ENCODE measurements at regions of chr12 and their contacts with region 1.

Region 1: GRCh38 chr12:108633534-108634248 is at the start of gene SELPLG:
- DNase-seq: peak; percentile 91
- H3K4me3 Mint-ChIP-seq: peak within 1 kb of the TSS; percentile 98
- H3K27ac Mint-ChIP-seq: peak within 1 kb of the TSS; percentile 100
- H3K4me1 Mint-ChIP-seq: peaks cover 53% of the 10 kb centered on the region
- H3K27me3 Mint-ChIP-seq: no peaks in the 10 kb centered on the region
- total RNA-seq, gene SELPLG: 19.9 to 21.9 TPM

Region 2: GRCh38 chr12:108495054-108495453 is 138.6 kb before region 1 on chr12:
- CTCF ChIA-PET with region 1: no interaction called
- intact Hi-C with region 1: no loop called
- DNase-seq: peak; percentile 38
- H3K4me3 Mint-ChIP-seq: no peak overlapping the region
- H3K27ac Mint-ChIP-seq: no peak overlapping the region
- H3K4me1 Mint-ChIP-seq: no peaks in the 10 kb centered on the region
- H3K27me3 Mint-ChIP-seq: peaks cover 23% of the 10 kb centered on the region

Region 3: GRCh38 chr12:108514973-108515814 is 118.5 kb before region 1 on chr12 and contains the start of gene FICD:
- CTCF ChIA-PET with region 1: interaction called, 3 read pairs
- intact Hi-C with region 1: loop called (anchors 2 kb)
- DNase-seq: peak; percentile 100
- H3K4me3 Mint-ChIP-seq: peak within 1 kb of the TSS; percentile 90
- H3K27ac Mint-ChIP-seq: peak within 1 kb of the TSS; percentile 84
- H3K4me1 Mint-ChIP-seq: peaks cover 28% of the 10 kb centered on the region
- H3K27me3 Mint-ChIP-seq: no peaks in the 10 kb centered on the region
- total RNA-seq, gene FICD: 3.4 to 3.7 TPM

Region 4: GRCh38 chr12:108618079-108618952 is 15.4 kb before region 1 on chr12:
- CTCF ChIA-PET with region 1: interaction called, 77 read pairs
- intact Hi-C with region 1: loop called (anchors 1 kb)
- DNase-seq: peak; percentile 81
- H3K4me3 Mint-ChIP-seq: no peak overlapping the region
- H3K27ac Mint-ChIP-seq: peak overlapping the region; percentile 20
- H3K4me1 Mint-ChIP-seq: peaks cover 36% of the 10 kb centered on the region
- H3K27me3 Mint-ChIP-seq: no peaks in the 10 kb centered on the region

Region 5: GRCh38 chr12:108664338-108665258 is 30.9 kb after region 1 on chr12:
- CTCF ChIA-PET with region 1: interaction called, 14 read pairs
- intact Hi-C with region 1: loop called (anchors 1 kb)
- DNase-seq: peak; percentile 95
- H3K4me3 Mint-ChIP-seq: peak overlapping the region; percentile 41
- H3K27ac Mint-ChIP-seq: peak overlapping the region; percentile 74
- H3K4me1 Mint-ChIP-seq: peaks cover 30% of the 10 kb centered on the region
- H3K27me3 Mint-ChIP-seq: no peaks in the 10 kb centered on the region

Region 6: GRCh38 chr12:108731105-108731865 is 97.6 kb after region 1 on chr12 and contains the start of gene CORO1C:
- CTCF ChIA-PET with region 1: no interaction called
- intact Hi-C with region 1: loop called (anchors 1 kb)
- DNase-seq: peak; percentile 96
- H3K4me3 Mint-ChIP-seq: peak within 1 kb of the TSS; percentile 89
- H3K27ac Mint-ChIP-seq: peak within 1 kb of the TSS; percentile 87
- H3K4me1 Mint-ChIP-seq: peaks cover 29% of the 10 kb centered on the region
- H3K27me3 Mint-ChIP-seq: no peaks in the 10 kb centered on the region
- total RNA-seq, gene CORO1C: 36.4 to 43.7 TPM

Region 7: GRCh38 chr12:108856428-108857157 is 222.9 kb after region 1 on chr12:
- CTCF ChIA-PET with region 1: no interaction called
- intact Hi-C with region 1: loop called (anchors 5 kb)
- DNase-seq: peak; percentile 74
- H3K4me3 Mint-ChIP-seq: peak overlapping the region; percentile 92
- H3K27ac Mint-ChIP-seq: peak overlapping the region; percentile 75
- H3K4me1 Mint-ChIP-seq: peaks cover 40% of the 10 kb centered on the region
- H3K27me3 Mint-ChIP-seq: no peaks in the 10 kb centered on the region

Region 8: DNA sequence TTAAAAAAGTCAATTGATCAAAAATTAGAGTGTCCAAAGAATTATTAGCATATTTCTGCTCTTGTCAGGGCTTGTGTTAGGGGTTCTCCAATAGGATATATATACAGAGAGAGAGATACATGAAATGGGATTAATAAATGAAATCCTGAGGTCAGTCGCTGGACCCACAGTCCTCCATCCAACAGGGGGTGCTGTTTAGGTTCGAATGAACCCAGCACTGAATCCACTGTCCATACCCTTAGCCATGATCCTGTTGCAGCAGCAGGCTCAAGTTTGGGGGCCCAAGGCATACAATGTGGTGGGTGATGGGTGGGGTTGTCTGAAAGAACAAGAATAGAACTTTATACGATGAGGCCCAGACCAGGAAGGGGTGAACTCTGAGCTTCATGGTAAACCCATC is 713.2 kb after region 1 on chr12:
- CTCF ChIA-PET with region 1: no interaction called
- intact Hi-C with region 1: no loop called
- DNase-seq: peak; percentile 26
- H3K4me3 Mint-ChIP-seq: no peak overlapping the region
- H3K27ac Mint-ChIP-seq: no peak overlapping the region
- H3K4me1 Mint-ChIP-seq: no peaks in the 10 kb centered on the region
- H3K27me3 Mint-ChIP-seq: peaks cover 9% of the 10 kb centered on the region

Region 9: GRCh38 chr12:109995686-109996482 is 1362.2 kb after region 1 on chr12 and contains the start of gene GIT2:
- CTCF ChIA-PET with region 1: no interaction called
- intact Hi-C with region 1: loop called (anchors 10 kb)
- DNase-seq: peak; percentile 96
- H3K4me3 Mint-ChIP-seq: peak within 1 kb of the TSS; percentile 94
- H3K27ac Mint-ChIP-seq: peak within 1 kb of the TSS; percentile 93
- H3K4me1 Mint-ChIP-seq: peaks cover 54% of the 10 kb centered on the region
- H3K27me3 Mint-ChIP-seq: no peaks in the 10 kb centered on the region
- total RNA-seq, gene GIT2: 40.2 to 41.6 TPM

Measured in activated naive CD4-positive, alpha-beta T cell treated with anti-CD3 and anti-CD28 coated beads for 36 hours (primary cell).